RWPE1 (cell line): ENCODE measurements at regions of chr11 and their contacts with region 1.

Region 1: GRCh38 chr11:119373921-119374631 is 7.4 kb downstream of the USP2 start:
- DNase-seq: peak; percentile 63
- H3K27ac ChIP-seq: peak overlapping the region; percentile 100
- CTCF ChIP-seq: peak; percentile 88

Region 2: GRCh38 chr11:119356349-119357031 is 17.6 kb before region 1 on chr11:
- CTCF ChIA-PET with region 1: interaction called, 77 read pairs
- POLR2A ChIA-PET with region 1: no interaction called
- DNase-seq: no peak
- H3K27ac ChIP-seq: peak overlapping the region; percentile 75
- CTCF ChIP-seq: peak; percentile 96

Region 3: GRCh38 chr11:119363851-119364590 is 10.1 kb before region 1 on chr11:
- CTCF ChIA-PET with region 1: interaction called, 77 read pairs
- POLR2A ChIA-PET with region 1: no interaction called
- DNase-seq: peak; percentile 61
- H3K27ac ChIP-seq: peak overlapping the region; percentile 100
- CTCF ChIP-seq: no peak

Region 4: GRCh38 chr11:119421941-119422808 is 48.1 kb after region 1 on chr11:
- CTCF ChIA-PET with region 1: no interaction called
- POLR2A ChIA-PET with region 1: no interaction called
- DNase-seq: no peak
- H3K27ac ChIP-seq: no peak overlapping the region
- CTCF ChIP-seq: no peak